ENCODE measurements at regions of chr1 and their contacts with region 1.

Region 1: DNA sequence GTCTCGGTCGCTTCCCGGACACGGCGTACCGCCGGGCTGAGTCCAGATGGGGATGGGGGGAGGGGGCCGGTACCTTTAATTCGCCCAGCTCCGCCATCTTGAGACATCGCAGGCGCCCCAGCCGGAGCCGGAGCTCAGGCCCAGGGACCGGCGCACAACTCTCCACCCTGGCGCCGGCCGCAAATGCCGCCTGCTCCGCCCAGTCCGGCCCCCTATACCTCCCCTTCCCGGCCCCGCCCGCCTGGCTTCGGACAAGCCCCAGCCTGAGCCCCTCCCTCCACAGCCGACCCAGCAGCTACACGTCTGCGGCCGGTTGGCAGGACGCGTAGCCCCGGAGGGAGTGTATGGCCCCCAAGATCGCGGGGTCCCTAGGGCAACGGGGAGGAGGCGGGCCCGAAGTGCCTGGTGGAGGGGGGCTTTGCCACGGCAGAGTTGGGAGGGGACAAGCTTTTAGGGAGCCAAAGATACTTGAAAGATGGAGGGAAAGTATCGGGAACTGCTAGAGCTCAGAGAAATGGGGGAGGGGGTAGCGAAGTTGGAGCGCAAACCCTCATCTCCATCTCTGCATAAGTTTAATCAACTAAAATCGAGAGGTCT is at the start of gene PIAS3:
- DNase-seq: peak; percentile 67 to 93 (median 77)
- ATAC-seq: peak; percentile 93
- H3K4me3 ChIP-seq: peak within 1 kb of the TSS; percentile 88
- H3K4me3 Mint-ChIP-seq: peak within 1 kb of the TSS; percentile 96 to 99 (median 98)
- H3K27ac ChIP-seq: peak within 1 kb of the TSS; percentile 80
- H3K27ac Mint-ChIP-seq: peak within 1 kb of the TSS; percentile 84 to 96 (median 91)
- H3K4me1 ChIP-seq: peaks cover 7 to 10% of the 10 kb centered on the region in 2 donors
- H3K4me1 Mint-ChIP-seq: peaks cover 10 to 22% (median 12%) of the 10 kb centered on the region in 7 donors
- H3K27me3 ChIP-seq: no peaks in the 10 kb centered on the region
- H3K27me3 Mint-ChIP-seq: peaks cover 0 to 11% (median 0%) of the 10 kb centered on the region in 5 donors
- total RNA-seq, gene PIAS3: 21.4 to 28.3 (median 23.0) TPM

Region 2: DNA sequence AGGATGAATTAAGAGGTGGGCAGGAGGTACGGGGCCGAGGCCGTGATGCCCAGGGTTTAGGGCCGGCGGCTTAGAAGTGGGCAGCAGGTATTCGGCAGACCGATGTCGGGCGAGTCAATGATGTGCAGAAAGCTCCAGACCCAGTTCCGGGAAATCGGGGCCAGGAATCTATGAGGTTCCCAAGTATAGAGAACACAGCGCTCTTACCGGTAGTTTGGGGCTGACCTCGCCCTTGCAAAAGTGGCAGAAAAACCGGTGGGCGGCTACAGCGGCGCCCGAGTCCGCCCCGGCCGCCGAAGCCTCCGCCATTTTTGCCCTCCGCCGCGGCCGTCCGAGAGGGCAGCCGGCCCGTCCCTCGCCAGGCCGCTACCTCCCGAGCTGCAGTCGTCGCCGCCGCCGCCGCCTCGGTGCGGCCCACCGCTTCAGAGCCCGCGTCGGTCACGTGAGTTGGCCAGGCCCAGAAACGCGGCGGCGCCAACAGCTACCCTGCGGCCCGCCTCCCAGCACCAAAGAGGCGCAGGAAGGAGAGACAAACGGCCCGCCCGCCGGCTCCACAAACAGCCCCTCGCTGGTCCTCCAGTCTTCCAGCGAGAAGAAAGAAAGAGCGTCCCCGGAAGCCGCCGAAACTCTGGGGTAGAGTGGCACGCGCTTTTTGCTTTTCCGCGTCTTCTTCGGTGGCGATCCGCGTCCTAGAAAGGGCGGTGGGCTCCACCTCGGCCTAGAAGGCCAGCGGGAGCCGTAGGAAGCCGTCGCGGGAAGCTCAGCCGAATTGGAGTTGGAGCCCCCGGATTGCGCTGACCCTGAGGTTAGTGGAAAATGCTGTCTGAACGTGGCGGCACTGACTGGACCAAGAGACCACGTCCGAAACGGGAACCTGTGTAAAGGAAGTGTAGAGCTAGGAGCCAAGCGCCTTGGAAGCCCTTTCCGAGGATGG is 35.2 kb before region 1 on chr1 and contains the starts of genes POLR3C and RNF115:
- CTCF ChIA-PET with region 1: no interaction called
- POLR2A ChIA-PET with region 1: interaction called, 15 read pairs
- intact Hi-C with region 1: loop called (anchors 1 kb)
- DNase-seq: peak; percentile 63 to 88 (median 82)
- ATAC-seq: peak; percentile 95
- H3K4me3 ChIP-seq: peak within 1 kb of the TSS; percentile 99
- H3K4me3 Mint-ChIP-seq: peak within 1 kb of the TSS; percentile 91 to 100 (median 98)
- H3K27ac ChIP-seq: peak within 1 kb of the TSS; percentile 82
- H3K27ac Mint-ChIP-seq: peak within 1 kb of the TSS; percentile 91 to 98 (median 96)
- H3K4me1 ChIP-seq: peaks cover 10 to 14% of the 10 kb centered on the region in 2 donors
- H3K4me1 Mint-ChIP-seq: peaks cover 19 to 43% (median 35%) of the 10 kb centered on the region in 7 donors
- H3K27me3 ChIP-seq: no peaks in the 10 kb centered on the region
- H3K27me3 Mint-ChIP-seq: no peaks in the 10 kb centered on the region
- total RNA-seq, gene POLR3C: 22.0 to 44.4 (median 32.5) TPM
- total RNA-seq, gene RNF115: 11.4 to 17.3 (median 15.6) TPM

Region 3: GRCh38 chr1:145885738-145886287 is 26.8 kb after region 1 on chr1 and contains the start of gene ANKRD35:
- CTCF ChIA-PET with region 1: interaction called, 5 read pairs
- POLR2A ChIA-PET with region 1: interaction called, 9 read pairs
- intact Hi-C with region 1: loop called (anchors 1 to 2 kb)
- DNase-seq: peak; percentile 73 to 87 (median 87)
- ATAC-seq: peak; percentile 99
- H3K4me3 ChIP-seq: peak within 1 kb of the TSS; percentile 60
- H3K4me3 Mint-ChIP-seq: peak within 1 kb of the TSS; percentile 73 to 93 (median 88)
- H3K27ac ChIP-seq: no peak within 1 kb of the TSS
- H3K27ac Mint-ChIP-seq: peak within 1 kb of the TSS in 6 of 9 donors; percentile 6 to 79 (median 39)
- H3K4me1 ChIP-seq: peaks cover 5 to 9% of the 10 kb centered on the region in 2 donors
- H3K4me1 Mint-ChIP-seq: peaks cover 9 to 22% (median 12%) of the 10 kb centered on the region in 7 donors
- H3K27me3 ChIP-seq: no peaks in the 10 kb centered on the region
- H3K27me3 Mint-ChIP-seq: peaks cover 6 to 39% (median 20%) of the 10 kb centered on the region in 5 donors
- total RNA-seq, gene ANKRD35: 0.15 to 0.58 TPM in 2 of 5 experiments, not detected in the others

Region 4: GRCh38 chr1:145927063-145927886 is 68.3 kb after region 1 on chr1 and contains the start of gene RBM8A:
- CTCF ChIA-PET with region 1: no interaction called
- POLR2A ChIA-PET with region 1: interaction called, 40 read pairs
- intact Hi-C with region 1: loop called (anchors 2 kb)
- DNase-seq: peak; percentile 70 to 98 (median 96)
- ATAC-seq: peak; percentile 98
- H3K4me3 ChIP-seq: peak within 1 kb of the TSS; percentile 98
- H3K4me3 Mint-ChIP-seq: peak within 1 kb of the TSS in 4 of 10 donors; percentile 48 to 85 (median 75)
- H3K27ac ChIP-seq: peak within 1 kb of the TSS; percentile 100
- H3K27ac Mint-ChIP-seq: peak within 1 kb of the TSS in 3 of 9 donors; percentile 56 to 95 (median 94)
- H3K4me1 ChIP-seq: peaks cover 26 to 28% of the 10 kb centered on the region in 2 donors
- H3K4me1 Mint-ChIP-seq: peaks cover 11 to 33% (median 23%) of the 10 kb centered on the region in 7 donors
- H3K27me3 ChIP-seq: no peaks in the 10 kb centered on the region
- H3K27me3 Mint-ChIP-seq: no peaks in the 10 kb centered on the region
- total RNA-seq, gene RBM8A: 115 to 182 (median 120) TPM

Region 5: DNA sequence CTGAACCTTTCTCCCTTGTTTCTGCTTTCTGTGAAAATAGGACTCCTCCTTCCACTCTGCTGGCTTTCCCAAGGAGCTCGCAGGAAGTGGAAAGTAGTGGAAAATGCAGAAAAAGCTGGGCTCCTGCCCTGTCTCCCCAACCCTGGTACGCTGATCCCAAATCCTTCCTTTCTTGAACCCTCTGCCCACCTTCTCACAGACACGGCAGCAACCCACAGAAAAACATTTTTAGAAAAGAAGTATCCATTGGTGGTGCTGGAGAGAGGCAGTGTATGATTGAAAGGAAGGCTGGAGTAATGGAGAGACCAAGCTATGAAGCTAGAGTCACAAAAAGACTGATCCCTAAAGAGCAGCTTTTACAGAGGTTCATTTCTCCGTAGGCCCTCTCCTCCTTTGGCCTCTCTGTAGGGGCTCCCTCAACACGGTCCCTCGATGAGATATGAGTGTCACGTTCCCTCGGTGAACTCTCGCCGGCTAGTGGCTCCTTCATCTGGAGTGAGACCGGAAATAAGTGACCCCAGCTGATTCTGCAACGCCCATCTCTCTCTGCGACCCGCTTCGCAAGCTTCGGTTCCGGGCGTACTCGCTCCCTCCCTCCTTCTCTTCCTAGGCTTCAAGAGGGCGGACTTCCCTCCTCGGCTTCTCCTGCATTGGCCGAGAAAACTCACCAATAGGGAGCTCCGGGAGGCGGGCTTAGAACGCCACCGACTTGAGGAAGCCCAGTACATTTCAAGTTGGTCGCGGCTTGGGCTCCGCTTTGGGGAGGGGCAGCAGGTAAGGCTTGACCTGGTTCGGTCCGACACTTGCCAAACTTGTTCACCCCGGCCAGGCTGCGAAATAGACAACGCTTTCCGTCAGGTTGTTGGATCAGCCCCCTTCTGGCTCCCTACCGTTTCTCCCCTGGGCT is 105.3 kb after region 1 on chr1 and contains the starts of genes ANKRD34A and POLR3GL:
- CTCF ChIA-PET with region 1: interaction called, 5 read pairs
- POLR2A ChIA-PET with region 1: interaction called, 25 read pairs
- intact Hi-C with region 1: no loop called
- DNase-seq: peak; percentile 71 to 94 (median 89)
- ATAC-seq: peak; percentile 96
- H3K4me3 ChIP-seq: peak within 1 kb of the TSS; percentile 87
- H3K4me3 Mint-ChIP-seq: peak within 1 kb of the TSS; percentile 88 to 99 (median 96)
- H3K27ac ChIP-seq: peak within 1 kb of the TSS; percentile 84
- H3K27ac Mint-ChIP-seq: peak within 1 kb of the TSS; percentile 87 to 98 (median 92)
- H3K4me1 ChIP-seq: peaks cover 14 to 31% of the 10 kb centered on the region in 2 donors
- H3K4me1 Mint-ChIP-seq: peaks cover 38 to 62% (median 57%) of the 10 kb centered on the region in 7 donors
- H3K27me3 ChIP-seq: no peaks in the 10 kb centered on the region
- H3K27me3 Mint-ChIP-seq: peaks cover 0 to 4% (median 0%) of the 10 kb centered on the region in 5 donors
- total RNA-seq, gene ANKRD34A: 0.54 to 1.5 (median 1.2) TPM
- total RNA-seq, gene POLR3GL: 20.7 to 37.5 (median 25.5) TPM

Region 6: GRCh38 chr1:146036965-146037646 is 178.1 kb after region 1 on chr1:
- CTCF ChIA-PET with region 1: interaction called, 3 read pairs
- POLR2A ChIA-PET with region 1: interaction called, 10 read pairs
- intact Hi-C with region 1: loop called in 1 of 2 experiments (anchors 1 kb)
- DNase-seq: peak; percentile 52 to 88 (median 83)
- ATAC-seq: peak; percentile 66
- H3K4me3 ChIP-seq: peak overlapping the region; percentile 87
- H3K4me3 Mint-ChIP-seq: peak overlapping the region; percentile 95 to 99 (median 97)
- H3K27ac ChIP-seq: peak overlapping the region; percentile 69
- H3K27ac Mint-ChIP-seq: peak overlapping the region; percentile 93 to 100 (median 98)
- H3K4me1 ChIP-seq: peaks cover 0 to 6% of the 10 kb centered on the region in 2 donors
- H3K4me1 Mint-ChIP-seq: peaks cover 7 to 49% (median 39%) of the 10 kb centered on the region in 7 donors
- H3K27me3 ChIP-seq: no peaks in the 10 kb centered on the region
- H3K27me3 Mint-ChIP-seq: peaks cover 0 to 32% (median 0%) of the 10 kb centered on the region in 5 donors

Measured in naive thymus-derived CD4-positive, alpha-beta T cell (primary cell).